HAP-1 (cell line): ENCODE measurements at regions of chr7 and their contacts with region 1.

Region 1: DNA sequence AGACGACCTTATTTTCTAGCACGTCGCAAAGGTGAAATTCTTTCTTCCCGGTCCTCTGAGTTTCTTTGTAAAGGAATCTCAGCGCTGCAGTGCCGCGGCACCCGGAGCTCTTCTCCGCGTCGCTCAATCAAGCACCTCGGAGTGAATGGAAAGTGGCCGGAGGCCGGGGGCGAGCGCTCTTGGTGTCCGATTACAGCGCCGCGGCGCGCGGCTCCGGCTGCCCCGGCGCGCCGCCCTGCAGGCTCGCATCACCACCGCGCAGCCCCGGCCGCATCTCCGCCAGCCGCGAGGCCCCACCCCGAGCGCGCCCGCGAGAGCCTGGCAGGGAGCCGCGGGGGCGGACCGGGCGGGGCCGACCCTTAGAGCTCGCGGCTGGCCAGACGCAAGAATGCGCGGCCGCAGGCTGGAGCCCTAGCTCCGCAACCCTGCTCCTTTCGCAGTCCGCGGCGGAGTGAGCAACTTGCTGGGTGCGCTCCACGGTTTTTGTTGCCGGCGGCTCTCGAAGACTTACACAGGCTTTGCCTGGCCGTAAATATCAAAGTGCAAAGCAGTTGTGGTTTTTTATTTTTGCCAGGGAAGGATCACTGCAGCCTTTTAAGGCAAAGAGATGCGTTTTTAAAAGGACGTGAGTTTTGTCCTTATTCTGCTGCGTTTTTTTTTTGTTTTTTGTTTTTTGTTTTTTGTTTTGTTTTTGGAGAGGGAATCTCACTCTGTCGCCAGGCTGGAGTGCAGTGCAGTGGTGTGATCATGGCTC is at the start of gene SEMA3C:
- DNase-seq: peak; percentile 85 to 90
- H3K4me3 ChIP-seq: peak within 1 kb of the TSS; percentile 31
- H3K4me1 ChIP-seq: peaks cover 6% of the 10 kb centered on the region
- H3K27me3 ChIP-seq: peaks cover 4% of the 10 kb centered on the region; the same call in 1 of the 2 replicates

Region 2: GRCh38 chr7:80530136-80530535 is 388.9 kb before region 1 on chr7:
- in situ Hi-C with region 1: no loop called
- DNase-seq: no peak
- H3K4me3 ChIP-seq: no peak overlapping the region
- H3K4me1 ChIP-seq: peaks cover 29% of the 10 kb centered on the region
- H3K27me3 ChIP-seq: no peaks in the 10 kb centered on the region

Region 3: GRCh38 chr7:81469869-81470723 is 551.0 kb after region 1 on chr7:
- in situ Hi-C with region 1: loop called (anchors 25 kb)
- DNase-seq: peak; percentile 76 to 83
- H3K4me3 ChIP-seq: no peak overlapping the region
- H3K4me1 ChIP-seq: no peaks in the 10 kb centered on the region
- H3K27me3 ChIP-seq: no peaks in the 10 kb centered on the region